ENCODE measurements at regions of chr1 and their contacts with region 1.

Region 1: DNA sequence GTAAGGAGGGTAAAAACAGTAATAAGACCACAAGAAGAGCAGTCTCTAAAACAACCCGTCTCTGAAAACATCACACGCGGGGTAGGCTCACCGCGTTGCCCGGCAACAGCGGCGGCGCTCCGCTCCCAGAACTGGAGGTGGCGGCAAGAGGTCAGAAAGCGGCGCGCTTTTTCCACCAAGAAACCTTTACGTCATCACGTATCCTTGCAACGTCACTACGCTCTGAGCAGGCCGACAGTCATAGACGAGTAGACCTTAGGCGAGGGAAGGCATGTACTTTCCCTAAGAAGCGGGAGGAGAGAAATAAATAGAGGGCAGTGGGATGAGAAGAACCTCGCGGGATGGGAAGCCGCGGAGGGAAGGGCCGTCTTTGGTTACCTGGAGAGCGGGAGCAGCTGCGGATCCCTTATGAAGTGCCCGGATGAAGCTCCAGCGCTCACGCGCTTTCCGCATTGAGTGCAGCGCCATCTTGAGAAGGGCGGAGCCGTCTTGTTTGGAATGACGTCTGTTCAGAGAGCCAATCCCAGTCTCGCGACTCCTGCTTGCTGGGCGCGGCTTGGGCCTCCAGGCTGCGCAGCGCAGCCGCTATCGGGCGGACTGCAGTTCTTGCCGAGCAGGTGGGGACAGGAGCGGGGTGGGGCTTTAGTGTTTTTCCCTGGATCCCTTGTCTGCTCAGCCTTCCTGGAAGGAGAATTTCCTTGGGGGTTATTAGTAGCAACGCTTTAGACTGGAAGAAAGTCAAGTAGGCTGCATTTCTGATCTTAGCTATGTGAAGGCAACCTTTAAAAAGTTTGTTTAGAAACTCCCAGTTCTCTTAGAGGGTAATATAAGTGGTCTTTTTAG is at the start of gene WARS2:
- DNase-seq: peak; percentile 96
- H3K4me3 ChIP-seq: peak within 1 kb of the TSS; percentile 52 to 73 (median 65)
- H3K27ac ChIP-seq: peak within 1 kb of the TSS; percentile 98
- H3K4me1 ChIP-seq: peaks cover 23% of the 10 kb centered on the region
- H3K27me3 ChIP-seq: no peaks in the 10 kb centered on the region
- CTCF ChIP-seq: no peak
- total RNA-seq, gene WARS2: 12.1 to 16.5 TPM

Region 2: DNA sequence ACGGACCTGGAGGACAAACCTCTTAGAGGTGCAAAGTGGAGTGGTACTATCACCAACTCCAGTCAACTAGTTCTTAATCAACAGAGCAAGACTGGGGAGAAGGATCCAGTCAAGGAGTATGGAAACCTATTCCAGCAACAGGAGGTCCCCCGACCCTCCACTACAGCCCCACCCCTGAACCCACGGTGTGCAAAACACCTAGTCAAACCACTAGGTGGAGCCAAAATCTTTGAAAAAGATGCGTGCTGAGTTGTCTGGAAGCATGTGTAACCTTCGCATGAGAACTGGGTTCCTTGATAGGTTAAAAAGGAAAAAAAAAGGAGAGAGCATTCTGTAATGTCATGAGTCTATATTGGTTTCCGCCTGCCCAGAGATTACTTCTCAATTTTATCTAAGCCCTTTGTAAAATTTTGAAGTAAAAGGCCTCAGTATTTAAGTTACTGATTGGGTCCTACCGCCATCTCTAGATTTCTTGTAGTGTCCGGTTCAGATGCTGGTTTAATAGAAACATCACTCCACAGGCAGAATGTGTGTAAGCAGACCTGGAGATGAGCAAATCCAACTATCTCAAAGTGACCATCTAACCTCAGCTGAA is 146.3 kb after region 1 on chr1:
- CTCF ChIA-PET with region 1: interaction called, 14 read pairs
- dilution Hi-C with region 1: no loop called
- in situ Hi-C with region 1: no loop called
- intact Hi-C with region 1: no loop called
- DNase-seq: peak; percentile 51
- H3K4me3 ChIP-seq: no peak overlapping the region
- H3K27ac ChIP-seq: no peak overlapping the region
- H3K4me1 ChIP-seq: peaks cover 17% of the 10 kb centered on the region
- H3K27me3 ChIP-seq: no peaks in the 10 kb centered on the region
- CTCF ChIP-seq: peak; percentile 49 to 74